Heart right ventricle (tissue), 16 donors: ENCODE measurements at regions of chr17 and their contacts with region 1.

Region 1: GRCh38 chr17:4215882-4216570 is 47.8 kb downstream of the ANKFY1 start:
- DNase-seq: no peak
- ATAC-seq: peak in 2 of 8 donors; percentile 42 to 44
- H3K4me3 ChIP-seq: no peak overlapping the region
- H3K27ac ChIP-seq: peak overlapping the region in 7 of 10 donors; percentile 7 to 83 (median 60)
- H3K4me1 ChIP-seq: peaks cover 0 to 39% (median 26%) of the 10 kb centered on the region in 9 donors
- H3K27me3 ChIP-seq: no peaks in the 10 kb centered on the region
- CTCF ChIP-seq: no peak

Region 2: GRCh38 chr17:4110152-4110551 is 105.9 kb before region 1 on chr17:
- intact Hi-C with region 1: no loop called
- DNase-seq: no peak
- ATAC-seq: no peak
- H3K4me3 ChIP-seq: no peak overlapping the region
- H3K27ac ChIP-seq: peak overlapping the region in 1 of 10 donors; percentile 5
- H3K4me1 ChIP-seq: peaks cover 0 to 19% (median 0%) of the 10 kb centered on the region in 9 donors
- H3K27me3 ChIP-seq: no peaks in the 10 kb centered on the region
- CTCF ChIP-seq: no peak

Region 3: DNA sequence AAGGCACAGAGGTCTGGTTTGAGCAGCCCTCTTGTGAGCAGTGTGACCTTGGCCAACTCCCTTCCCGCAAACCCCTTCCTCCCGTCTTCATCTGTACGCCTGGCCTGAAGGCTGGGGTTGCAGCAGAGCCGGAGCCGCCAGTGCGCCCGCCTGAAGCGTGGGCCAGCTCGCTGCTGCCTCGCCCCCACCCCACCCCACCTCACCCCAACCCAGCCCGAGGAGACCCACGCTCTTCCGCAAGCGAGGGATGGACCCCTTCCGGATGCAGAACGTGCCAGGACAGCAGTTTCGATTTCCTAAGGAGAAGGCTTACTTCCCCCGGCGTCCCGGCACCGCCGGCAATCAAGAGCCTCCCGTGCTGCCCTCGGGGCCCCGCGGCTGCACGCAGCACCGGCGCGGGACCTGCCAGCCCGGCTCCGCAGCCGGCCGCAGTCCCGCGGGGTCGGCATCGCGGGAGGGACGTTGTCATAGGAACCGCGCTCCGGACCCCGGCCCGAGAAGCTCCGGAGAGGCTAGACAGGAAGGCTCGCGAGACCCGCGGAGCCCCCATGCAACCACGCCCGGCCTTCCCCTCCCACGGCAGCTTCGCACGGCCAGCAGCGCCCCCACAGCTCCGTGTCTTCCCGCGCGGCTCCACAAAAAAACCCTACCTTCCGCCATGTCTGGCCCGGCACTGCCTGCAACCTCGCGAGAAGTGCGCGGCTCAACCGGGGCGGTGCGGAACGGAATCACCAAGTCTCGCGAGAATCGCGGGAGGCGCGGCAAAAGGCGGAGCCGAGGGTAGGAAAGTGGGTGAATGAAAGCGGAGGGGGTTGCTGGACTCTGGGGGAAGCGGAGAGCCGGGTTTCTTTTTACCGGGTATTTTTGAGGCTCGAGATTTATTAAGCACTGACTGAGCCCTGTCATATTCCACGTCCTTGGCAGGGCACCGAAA is 47.5 kb after region 1 on chr17 and contains the start of gene ANKFY1:
- intact Hi-C with region 1: loop called in 3 of 10 experiments (anchors 5 to 10 kb)
- DNase-seq: peak; percentile 97 to 98
- ATAC-seq: peak; percentile 94 to 99 (median 99)
- H3K4me3 ChIP-seq: peak within 1 kb of the TSS; percentile 72 to 100 (median 84)
- H3K27ac ChIP-seq: peak within 1 kb of the TSS; percentile 6 to 97 (median 89)
- H3K4me1 ChIP-seq: peaks cover 8 to 29% (median 23%) of the 10 kb centered on the region in 9 donors
- H3K27me3 ChIP-seq: no peaks in the 10 kb centered on the region
- CTCF ChIP-seq: peak in 4 of 9 donors; percentile 16 to 44 (median 28)
- total RNA-seq, gene ANKFY1: 18.7 to 34.4 (median 24.4) TPM